ENCODE measurements at regions of chr4 and their contacts with region 1.

Region 1: DNA sequence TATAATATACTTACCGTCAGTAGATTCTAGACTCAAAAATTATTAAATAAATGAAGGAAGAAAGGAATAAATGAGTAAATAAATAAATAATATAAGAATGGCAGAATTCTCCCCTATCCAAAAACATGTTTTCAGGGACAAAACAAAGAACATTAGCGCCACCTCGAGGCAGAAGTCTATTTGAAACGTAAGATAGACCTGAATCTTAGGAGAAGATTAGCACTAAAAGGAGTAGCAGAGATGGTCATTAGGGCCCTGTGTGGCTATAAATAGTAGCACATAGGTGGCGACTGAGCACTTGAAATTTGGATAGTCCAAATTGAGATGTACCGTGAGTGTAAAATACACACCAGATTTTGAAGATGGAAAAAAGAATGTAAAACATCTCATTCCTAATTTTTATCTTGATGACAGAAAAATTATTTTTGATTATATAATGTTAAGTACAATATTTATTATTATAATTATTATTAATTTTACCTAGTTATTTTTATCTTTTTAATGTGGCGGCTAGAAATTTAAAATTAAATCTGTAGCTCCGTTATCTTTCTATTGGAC is 24.3 kb upstream of the SRD5A3 start:
- DNase-seq: peak in 4 of 6 donors; percentile 20 to 58 (median 44)
- ATAC-seq: peak in 3 of 4 donors; percentile 54 to 61 (median 61)
- H3K4me3 ChIP-seq: no peak overlapping the region
- H3K27ac ChIP-seq: no peak overlapping the region
- H3K4me1 ChIP-seq: no peaks in the 10 kb centered on the region
- H3K27me3 ChIP-seq: no peaks in the 10 kb centered on the region
- CTCF ChIP-seq: peak in 3 of 4 donors; percentile 21 to 30 (median 24)

Region 2: GRCh38 chr4:54971474-54971950 is 350.3 kb before region 1 on chr4:
- intact Hi-C with region 1: loop called in 1 of 3 experiments (anchors 5 kb)
- DNase-seq: no peak
- ATAC-seq: peak in 3 of 4 donors; percentile 84 to 90 (median 88)
- H3K4me3 ChIP-seq: no peak overlapping the region
- H3K27ac ChIP-seq: no peak overlapping the region
- H3K4me1 ChIP-seq: no peaks in the 10 kb centered on the region
- H3K27me3 ChIP-seq: no peaks in the 10 kb centered on the region
- CTCF ChIP-seq: peak; percentile 31 to 64 (median 45)

Region 3: GRCh38 chr4:55008166-55009070 is 313.4 kb before region 1 on chr4:
- intact Hi-C with region 1: loop called in 1 of 3 experiments (anchors 10 kb)
- DNase-seq: no peak
- ATAC-seq: no peak
- H3K4me3 ChIP-seq: no peak overlapping the region
- H3K27ac ChIP-seq: no peak overlapping the region
- H3K4me1 ChIP-seq: no peaks in the 10 kb centered on the region
- H3K27me3 ChIP-seq: no peaks in the 10 kb centered on the region
- CTCF ChIP-seq: no peak

Region 4: GRCh38 chr4:55483310-55483709 is 161.5 kb after region 1 on chr4:
- intact Hi-C with region 1: no loop called
- DNase-seq: no peak
- ATAC-seq: no peak
- H3K4me3 ChIP-seq: no peak overlapping the region
- H3K27ac ChIP-seq: no peak overlapping the region
- H3K4me1 ChIP-seq: no peaks in the 10 kb centered on the region
- H3K27me3 ChIP-seq: no peaks in the 10 kb centered on the region
- CTCF ChIP-seq: no peak